Caco-2 (cell line): ENCODE measurements at regions of chr1 and their contacts with region 1.

Region 1: GRCh38 chr1:244821134-244821533 is 14.3 kb upstream of the COX20 start:
- DNase-seq: peak; percentile 70 to 82
- H3K4me3 ChIP-seq: no peak overlapping the region
- H3K4me3 Mint-ChIP-seq: peak overlapping the region; percentile 39
- H3K27ac Mint-ChIP-seq: peak overlapping the region; percentile 90
- H3K4me1 ChIP-seq: peaks cover 50% of the 10 kb centered on the region
- H3K4me1 Mint-ChIP-seq: peaks cover 15% of the 10 kb centered on the region
- H3K27me3 ChIP-seq: no peaks in the 10 kb centered on the region
- H3K27me3 Mint-ChIP-seq: no peaks in the 10 kb centered on the region
- CTCF ChIP-seq: no peak

Region 2: GRCh38 chr1:244802041-244802440 is 19.1 kb before region 1 on chr1:
- CTCF ChIA-PET with region 1: interaction called, 6 read pairs
- POLR2A ChIA-PET with region 1: no interaction called
- intact Hi-C with region 1: loop called (anchors 2 kb)
- DNase-seq: peak; percentile 47 to 75
- H3K4me3 ChIP-seq: no peak overlapping the region
- H3K4me3 Mint-ChIP-seq: peak overlapping the region; percentile 42
- H3K27ac Mint-ChIP-seq: peak overlapping the region; percentile 71
- H3K4me1 ChIP-seq: peaks cover 15% of the 10 kb centered on the region
- H3K4me1 Mint-ChIP-seq: peaks cover 12% of the 10 kb centered on the region
- H3K27me3 ChIP-seq: no peaks in the 10 kb centered on the region
- H3K27me3 Mint-ChIP-seq: no peaks in the 10 kb centered on the region
- CTCF ChIP-seq: no peak

Region 3: GRCh38 chr1:244841273-244841927 is 20.3 kb after region 1 on chr1:
- CTCF ChIA-PET with region 1: no interaction called
- POLR2A ChIA-PET with region 1: no interaction called
- intact Hi-C with region 1: no loop called
- DNase-seq: no peak
- H3K4me3 ChIP-seq: no peak overlapping the region
- H3K4me3 Mint-ChIP-seq: no peak overlapping the region
- H3K27ac Mint-ChIP-seq: no peak overlapping the region
- H3K4me1 ChIP-seq: peaks cover 43% of the 10 kb centered on the region
- H3K4me1 Mint-ChIP-seq: peaks cover 28% of the 10 kb centered on the region
- H3K27me3 ChIP-seq: no peaks in the 10 kb centered on the region
- H3K27me3 Mint-ChIP-seq: no peaks in the 10 kb centered on the region
- CTCF ChIP-seq: no peak

Region 4: DNA sequence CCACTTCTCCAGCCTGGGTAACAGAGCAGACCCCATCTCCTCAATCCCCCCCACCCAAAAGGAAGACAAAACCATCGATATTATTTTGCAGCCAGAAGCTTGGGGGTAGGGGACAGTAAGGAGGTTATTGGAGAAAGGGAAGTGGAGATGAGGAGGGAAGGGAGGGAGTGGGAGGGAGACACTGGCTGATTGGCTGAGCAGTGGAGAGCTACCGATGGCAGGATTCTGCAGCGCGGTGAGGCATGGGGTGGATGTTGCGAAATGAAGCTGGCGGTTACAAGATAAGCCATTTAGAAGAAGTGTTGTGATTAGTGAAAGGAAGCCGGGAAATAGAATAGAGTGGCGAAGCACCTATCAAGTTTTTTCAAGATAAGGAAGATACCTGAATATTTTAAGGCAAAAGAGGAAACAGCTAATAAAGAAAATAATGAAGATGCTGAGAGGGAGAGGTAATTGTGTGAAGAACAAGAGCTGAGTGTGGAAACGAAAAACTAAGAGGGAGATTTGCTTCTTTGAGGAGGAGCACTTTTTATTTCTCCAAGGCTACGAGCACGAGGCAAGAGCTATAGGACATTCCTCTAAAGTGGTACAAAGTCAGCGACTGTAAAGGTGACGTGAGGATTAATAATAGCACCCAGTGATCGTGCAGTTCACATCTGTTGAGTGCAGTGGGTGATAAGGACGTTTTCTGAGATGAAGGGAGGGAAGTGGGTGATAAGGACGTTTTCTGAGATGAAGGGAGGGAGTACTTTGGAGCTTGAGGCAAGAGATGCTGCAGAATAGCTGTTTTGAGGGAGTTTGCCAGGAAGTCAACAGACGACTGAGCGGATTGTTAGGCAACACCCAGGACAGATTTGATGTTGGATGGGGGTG is 230.5 kb after region 1 on chr1:
- CTCF ChIA-PET with region 1: no interaction called
- POLR2A ChIA-PET with region 1: no interaction called
- intact Hi-C with region 1: no loop called
- DNase-seq: peak in 1 of 2 experiments; percentile 48
- H3K4me3 ChIP-seq: no peak overlapping the region
- H3K4me3 Mint-ChIP-seq: peak overlapping the region; percentile 6
- H3K27ac Mint-ChIP-seq: no peak overlapping the region
- H3K4me1 ChIP-seq: peaks cover 4% of the 10 kb centered on the region
- H3K4me1 Mint-ChIP-seq: peaks cover 30% of the 10 kb centered on the region
- H3K27me3 ChIP-seq: no peaks in the 10 kb centered on the region
- H3K27me3 Mint-ChIP-seq: no peaks in the 10 kb centered on the region
- CTCF ChIP-seq: no peak